Activated CD8-positive, alpha-beta memory T cell treated with anti-CD3 and anti-CD28 coated beads, Interleukin-2, amount 10 ng/mL, durations not matched to agents 7 days and 5 days (primary cell): ENCODE measurements at regions of chr17 and their contacts with region 1.

Region 1: GRCh38 chr17:6473128-6473767 is 29.0 kb downstream of the PIMREG start:
- DNase-seq: peak; percentile 75
- ATAC-seq: peak; percentile 78
- H3K4me3 Mint-ChIP-seq: no peak overlapping the region
- H3K27ac Mint-ChIP-seq: no peak overlapping the region
- H3K4me1 Mint-ChIP-seq: no peaks in the 10 kb centered on the region
- H3K27me3 Mint-ChIP-seq: no peaks in the 10 kb centered on the region

Region 2: DNA sequence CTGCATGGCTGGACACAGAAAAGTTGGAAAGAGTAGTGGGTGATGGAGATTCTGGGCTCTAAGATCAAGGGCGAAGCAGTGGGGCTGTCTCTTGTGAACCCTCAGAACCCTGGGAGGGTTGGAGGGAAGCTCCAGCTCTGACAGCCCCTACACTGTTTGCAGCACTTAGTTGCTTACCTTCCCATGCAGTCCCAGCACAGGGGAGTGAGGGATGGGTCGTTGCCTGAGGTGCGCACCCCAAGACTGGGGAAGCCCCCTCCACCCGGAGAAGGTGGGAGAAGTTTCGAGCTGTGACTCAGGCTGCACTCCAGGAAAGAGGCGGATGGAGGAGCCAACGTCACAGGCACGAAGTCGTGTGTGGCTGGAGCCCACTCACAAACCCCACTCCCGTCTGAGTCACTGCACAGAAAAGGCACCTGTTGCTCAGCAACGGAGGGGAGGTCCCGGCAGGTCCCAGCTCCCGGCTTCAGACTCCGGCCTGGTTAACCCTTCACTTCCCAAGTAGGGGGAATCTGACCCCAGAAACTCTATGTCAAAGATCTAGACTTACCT is 98.4 kb before region 1 on chr17:
- CTCF ChIA-PET with region 1: no interaction called
- DNase-seq: peak; percentile 53
- ATAC-seq: peak; percentile 39
- H3K4me3 Mint-ChIP-seq: no peak overlapping the region
- H3K27ac Mint-ChIP-seq: no peak overlapping the region
- H3K4me1 Mint-ChIP-seq: peaks cover 15% of the 10 kb centered on the region
- H3K27me3 Mint-ChIP-seq: peaks cover 22% of the 10 kb centered on the region

Region 3: DNA sequence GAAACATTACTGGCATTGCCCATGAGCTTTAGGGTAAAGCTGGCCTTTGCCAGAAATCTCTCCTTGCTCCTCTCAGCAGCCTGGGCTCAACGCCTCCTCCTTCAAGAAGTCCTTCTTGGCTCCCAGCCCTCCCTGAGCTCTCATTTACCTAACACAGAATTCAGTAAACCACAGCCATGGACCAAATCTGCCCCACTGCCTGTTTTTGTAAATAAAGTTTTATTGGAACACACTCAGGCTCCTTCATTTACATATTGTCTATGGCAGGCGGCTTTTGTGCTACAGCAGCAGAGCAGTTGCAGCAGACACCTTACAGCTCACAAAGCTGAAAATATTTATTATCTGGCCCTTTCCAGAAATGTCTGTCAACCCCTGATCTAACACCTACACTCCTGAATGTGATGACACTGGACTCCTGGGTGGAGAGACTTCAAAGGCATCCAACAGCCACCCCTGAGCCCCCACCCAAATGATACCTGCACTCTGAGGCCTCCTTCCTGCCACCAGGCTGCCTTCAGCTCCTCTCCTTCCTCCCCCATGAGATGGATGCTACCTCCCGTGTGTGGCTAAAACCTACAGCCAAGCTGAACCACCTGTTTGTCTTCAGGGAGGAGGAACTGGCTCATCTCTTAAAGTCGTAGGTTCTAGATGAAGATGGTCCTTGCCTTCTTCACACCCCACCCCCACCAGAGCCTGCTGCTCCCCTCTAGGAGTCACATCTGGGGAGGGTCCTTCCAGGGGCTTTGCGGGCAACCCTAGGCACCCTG is 12.6 kb after region 1 on chr17:
- CTCF ChIA-PET with region 1: interaction called, 13 read pairs
- DNase-seq: no peak
- ATAC-seq: no peak
- H3K4me3 Mint-ChIP-seq: no peak overlapping the region
- H3K27ac Mint-ChIP-seq: no peak overlapping the region
- H3K4me1 Mint-ChIP-seq: no peaks in the 10 kb centered on the region
- H3K27me3 Mint-ChIP-seq: no peaks in the 10 kb centered on the region

Region 4: DNA sequence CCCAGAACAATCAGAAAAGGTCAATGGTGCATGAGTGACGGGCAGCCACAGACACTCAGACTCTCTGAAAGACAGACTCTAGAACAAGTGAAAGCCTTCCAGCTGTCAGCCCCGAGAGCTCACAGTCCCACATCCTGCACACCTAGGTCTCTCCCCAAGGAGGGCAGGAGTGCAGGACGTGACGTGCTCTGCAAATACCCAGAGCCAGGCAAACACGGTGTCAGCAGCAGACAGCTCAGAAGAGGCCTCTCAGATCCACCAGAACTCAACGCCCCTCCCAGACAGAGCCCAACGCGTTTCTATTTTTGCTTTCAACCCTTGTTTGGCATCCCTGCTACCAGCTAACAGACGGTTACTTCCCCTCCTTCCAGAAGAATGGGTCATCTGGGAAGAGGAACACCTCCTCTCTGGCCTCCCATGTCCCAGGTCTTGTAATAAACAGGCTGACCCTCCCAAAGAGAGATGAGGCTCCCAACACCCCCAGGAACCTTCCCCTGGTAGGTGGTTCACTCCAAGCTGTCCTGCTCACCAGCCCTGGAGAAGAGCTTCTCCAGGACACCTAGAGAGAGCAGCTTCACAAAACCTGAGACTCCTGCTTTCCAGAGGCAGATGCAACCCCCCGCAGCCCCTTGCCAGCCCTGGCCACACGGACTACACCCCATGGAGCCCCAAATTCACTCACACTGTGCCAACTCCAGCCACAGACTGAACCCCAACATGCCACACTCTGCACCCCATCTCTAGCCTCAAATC is 75.5 kb after region 1 on chr17:
- CTCF ChIA-PET with region 1: interaction called, 12 read pairs
- DNase-seq: peak; percentile 71
- ATAC-seq: peak; percentile 85
- H3K4me3 Mint-ChIP-seq: no peak overlapping the region
- H3K27ac Mint-ChIP-seq: no peak overlapping the region
- H3K4me1 Mint-ChIP-seq: peaks cover 18% of the 10 kb centered on the region
- H3K27me3 Mint-ChIP-seq: peaks cover 19% of the 10 kb centered on the region

Region 5: DNA sequence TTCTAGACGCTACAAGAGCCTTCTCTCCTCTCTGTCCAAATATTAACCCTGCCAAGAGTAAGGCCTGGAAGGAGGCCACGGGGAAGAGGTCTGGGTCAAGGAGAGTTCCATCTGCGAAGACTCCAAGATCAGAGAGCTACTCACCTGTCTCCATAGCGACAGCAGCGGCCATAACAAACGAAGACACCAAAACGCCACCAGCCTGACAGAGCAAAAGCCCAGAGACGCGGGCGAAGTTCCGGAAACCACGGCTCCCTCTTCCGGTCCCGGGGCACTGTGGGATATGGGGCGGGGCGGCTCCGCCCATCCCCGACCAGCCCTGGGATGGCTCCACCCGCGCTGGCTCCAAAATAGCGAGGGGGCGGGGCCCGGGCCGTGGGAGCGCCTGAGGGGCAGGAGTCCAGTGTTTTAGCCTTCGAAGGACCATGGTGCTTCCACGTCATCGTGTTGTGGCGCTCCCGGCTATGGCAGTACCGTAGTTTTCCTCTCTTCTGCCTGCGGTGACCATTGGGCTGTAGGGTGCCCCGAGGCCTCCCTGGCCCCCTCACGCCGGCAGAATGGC is 178.2 kb after region 1 on chr17 and contains the starts of genes C17orf100 and MED31:
- CTCF ChIA-PET with region 1: interaction called, 21 read pairs
- DNase-seq: peak; percentile 96
- ATAC-seq: peak; percentile 95
- H3K4me3 Mint-ChIP-seq: peak within 1 kb of the TSS; percentile 93
- H3K27ac Mint-ChIP-seq: peak within 1 kb of the TSS; percentile 99
- H3K4me1 Mint-ChIP-seq: peaks cover 54% of the 10 kb centered on the region
- H3K27me3 Mint-ChIP-seq: peaks cover 18% of the 10 kb centered on the region
- total RNA-seq, gene C17orf100: 1.1 to 1.4 TPM
- total RNA-seq, gene MED31: 18.3 TPM